WTC11 (cell line): ENCODE measurements at regions of chr9 and their contacts with region 1.

Region 1: GRCh38 chr9:90914868-90915483 is 113.4 kb downstream of the SYK start:
- DNase-seq: peak; percentile 82
- ATAC-seq: peak; percentile 95
- H3K4me3 Mint-ChIP-seq: no peak overlapping the region
- H3K27ac Mint-ChIP-seq: no peak overlapping the region
- H3K4me1 Mint-ChIP-seq: no peaks in the 10 kb centered on the region
- H3K27me3 Mint-ChIP-seq: no peaks in the 10 kb centered on the region
- CTCF ChIP-seq: peak; percentile 86

Region 2: DNA sequence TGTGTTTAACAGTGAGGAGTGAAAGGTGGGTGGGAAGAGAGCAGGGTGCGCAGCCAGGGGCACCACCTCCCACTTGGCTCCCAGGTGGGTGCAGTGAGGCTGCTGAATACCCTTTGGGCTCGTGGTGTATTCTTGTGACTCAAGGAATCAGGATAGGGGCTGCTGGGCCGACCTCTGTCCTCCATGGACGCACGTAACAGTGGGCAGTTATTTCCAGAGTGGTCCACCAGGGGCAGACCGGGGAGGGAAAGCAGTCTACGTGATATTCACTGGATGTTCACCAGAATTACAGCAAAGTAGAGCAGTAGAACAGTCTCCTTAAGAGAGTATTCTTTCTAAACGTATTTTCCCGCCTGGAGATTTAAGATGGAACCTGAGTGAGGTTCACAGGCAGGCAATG is 24.8 kb before region 1 on chr9:
- CTCF ChIA-PET with region 1: interaction called, 19 read pairs
- POLR2A ChIA-PET with region 1: no interaction called
- DNase-seq: peak; percentile 54
- ATAC-seq: peak; percentile 79
- H3K4me3 Mint-ChIP-seq: peak overlapping the region; percentile 10; the same call in 1 of the 2 replicates
- H3K27ac Mint-ChIP-seq: peak overlapping the region; percentile 89
- H3K4me1 Mint-ChIP-seq: peaks cover 60% of the 10 kb centered on the region
- H3K27me3 Mint-ChIP-seq: no peaks in the 10 kb centered on the region; the same call in 1 of the 2 replicates
- CTCF ChIP-seq: 0 out of 2 replicates have a peak, but pooled peaks have one; percentile 25

Region 3: GRCh38 chr9:90956026-90956810 is 41.2 kb after region 1 on chr9:
- CTCF ChIA-PET with region 1: interaction called, 13 read pairs
- POLR2A ChIA-PET with region 1: no interaction called
- DNase-seq: no peak
- ATAC-seq: no peak
- H3K4me3 Mint-ChIP-seq: no peak overlapping the region
- H3K27ac Mint-ChIP-seq: no peak overlapping the region
- H3K4me1 Mint-ChIP-seq: peaks cover 15% of the 10 kb centered on the region
- H3K27me3 Mint-ChIP-seq: peaks cover 4% of the 10 kb centered on the region
- CTCF ChIP-seq: no peak

Region 4: DNA sequence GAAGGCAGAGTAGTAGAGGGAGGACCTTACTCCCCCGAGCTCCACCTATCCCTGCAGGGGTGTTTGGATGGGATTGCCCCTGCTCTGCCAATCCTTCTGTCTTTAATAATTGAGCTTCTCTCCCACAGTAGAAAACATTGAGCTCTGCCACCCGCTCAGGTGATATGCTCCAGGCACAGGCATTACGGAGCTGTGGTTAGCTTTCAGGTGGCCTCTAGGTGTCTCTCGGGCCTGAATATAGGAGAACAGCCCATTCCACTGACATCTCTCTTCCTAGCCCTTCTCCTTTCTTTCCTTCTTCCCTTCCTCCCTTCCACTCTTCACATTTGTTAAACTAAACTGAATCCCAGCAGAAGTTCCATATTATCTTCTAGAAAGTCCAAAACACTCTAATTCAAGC is 90.0 kb after region 1 on chr9:
- CTCF ChIA-PET with region 1: interaction called, 24 read pairs
- POLR2A ChIA-PET with region 1: no interaction called
- DNase-seq: no peak
- ATAC-seq: peak; percentile 88
- H3K4me3 Mint-ChIP-seq: no peak overlapping the region
- H3K27ac Mint-ChIP-seq: no peak overlapping the region
- H3K4me1 Mint-ChIP-seq: no peaks in the 10 kb centered on the region
- H3K27me3 Mint-ChIP-seq: no peaks in the 10 kb centered on the region; the same call in 1 of the 2 replicates
- CTCF ChIP-seq: no peak

Region 5: DNA sequence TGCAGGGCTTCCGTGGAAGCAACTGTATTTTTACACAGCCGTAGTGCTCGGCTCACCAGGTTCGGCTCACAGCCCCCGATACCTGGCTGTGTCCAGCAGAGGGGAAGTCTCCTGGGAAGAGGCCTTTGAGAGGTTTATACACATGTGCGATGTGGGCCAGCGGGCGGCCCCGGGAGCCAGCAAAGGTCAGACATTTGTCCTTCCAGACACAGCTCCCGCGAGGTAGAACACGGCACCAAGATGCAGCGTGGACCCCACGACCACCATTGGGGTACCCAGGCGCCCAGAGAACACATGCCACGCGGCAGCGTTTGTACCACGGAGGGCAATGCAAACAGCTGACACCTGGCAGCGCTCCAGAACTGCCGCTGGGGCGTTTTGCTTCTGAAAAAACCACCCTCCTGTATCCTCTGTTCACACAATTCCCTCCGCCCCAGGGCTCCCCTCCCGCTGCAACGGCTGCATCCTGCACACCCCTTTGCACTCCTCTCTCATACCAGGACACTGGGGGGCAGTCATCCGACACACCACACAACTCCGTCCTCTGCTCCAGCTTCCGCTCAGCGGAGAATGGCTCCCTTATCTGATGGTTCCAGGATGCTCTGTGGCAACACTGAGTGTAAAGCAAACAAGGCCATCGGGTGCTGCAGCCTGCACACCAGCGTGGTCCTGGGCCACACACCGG is 122.0 kb after region 1 on chr9:
- CTCF ChIA-PET with region 1: interaction called, 33 read pairs
- POLR2A ChIA-PET with region 1: no interaction called
- DNase-seq: peak; percentile 78
- ATAC-seq: peak; percentile 93
- H3K4me3 Mint-ChIP-seq: no peak overlapping the region
- H3K27ac Mint-ChIP-seq: no peak overlapping the region
- H3K4me1 Mint-ChIP-seq: peaks cover 26% of the 10 kb centered on the region
- H3K27me3 Mint-ChIP-seq: no peaks in the 10 kb centered on the region
- CTCF ChIP-seq: no peak

Region 6: GRCh38 chr9:91346652-91347051 is 431.7 kb after region 1 on chr9:
- CTCF ChIA-PET with region 1: interaction called, 14 read pairs
- POLR2A ChIA-PET with region 1: no interaction called
- DNase-seq: no peak
- ATAC-seq: no peak
- H3K4me3 Mint-ChIP-seq: no peak overlapping the region
- H3K27ac Mint-ChIP-seq: peak overlapping the region; percentile 15; the same call in 1 of the 2 replicates
- H3K4me1 Mint-ChIP-seq: peaks cover 54% of the 10 kb centered on the region
- H3K27me3 Mint-ChIP-seq: no peaks in the 10 kb centered on the region
- CTCF ChIP-seq: no peak